Adrenal gland (tissue), 19 donors: ENCODE measurements at regions of chr11 and their contacts with region 1.

Region 1: DNA sequence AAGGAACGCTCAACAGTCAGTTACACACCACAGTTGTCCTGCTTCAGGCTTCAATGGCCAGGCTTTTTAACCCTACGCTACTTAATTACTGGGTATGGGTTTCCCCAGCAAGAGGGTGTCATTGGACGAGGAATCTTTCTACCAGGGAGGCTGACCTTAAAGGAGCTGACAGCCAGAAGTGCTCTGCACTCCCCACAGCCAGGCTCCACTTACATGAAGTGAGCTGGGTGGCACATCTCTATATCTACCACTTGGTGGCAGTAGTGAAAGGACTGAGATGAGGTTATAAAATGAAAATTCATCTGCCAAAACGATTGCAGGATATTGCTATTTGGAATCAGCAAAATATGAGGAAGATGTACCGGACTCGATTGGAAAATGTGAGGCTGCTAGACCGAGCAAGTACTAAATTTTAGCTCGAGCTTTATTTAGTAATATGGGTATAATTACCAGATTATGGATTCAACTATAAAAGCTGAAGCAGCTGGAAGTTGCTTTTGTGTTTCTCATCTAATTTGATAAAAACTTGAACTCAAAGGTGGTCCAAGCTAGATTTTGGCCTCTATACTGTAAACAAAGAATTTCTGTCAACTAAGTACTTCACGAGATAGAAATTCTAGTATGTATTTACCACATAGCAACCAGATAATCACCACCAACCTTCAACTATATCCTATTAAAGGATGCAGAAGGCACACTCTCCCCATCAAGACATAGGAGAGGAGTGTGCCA is 53.9 kb upstream of the CEP126 start:
- DNase-seq: peak; percentile 37 to 70 (median 51)
- H3K4me3 ChIP-seq: no peak overlapping the region
- H3K27ac ChIP-seq: no peak overlapping the region
- H3K4me1 ChIP-seq: peaks cover 0 to 7% of the 10 kb centered on the region in 2 donors
- H3K27me3 ChIP-seq: no peaks in the 10 kb centered on the region
- CTCF ChIP-seq: peak; percentile 66 to 85 (median 78)
- POLR2A ChIP-seq: no peak

Region 2: GRCh38 chr11:101929294-101929916 is 68.5 kb after region 1 on chr11:
- intact Hi-C with region 1: loop called in 1 of 2 experiments (anchors 10 kb)
- DNase-seq: no peak
- H3K4me3 ChIP-seq: no peak overlapping the region
- H3K27ac ChIP-seq: no peak overlapping the region
- H3K4me1 ChIP-seq: no peaks in the 10 kb centered on the region
- H3K27me3 ChIP-seq: no peaks in the 10 kb centered on the region
- CTCF ChIP-seq: no peak
- POLR2A ChIP-seq: no peak

Region 3: DNA sequence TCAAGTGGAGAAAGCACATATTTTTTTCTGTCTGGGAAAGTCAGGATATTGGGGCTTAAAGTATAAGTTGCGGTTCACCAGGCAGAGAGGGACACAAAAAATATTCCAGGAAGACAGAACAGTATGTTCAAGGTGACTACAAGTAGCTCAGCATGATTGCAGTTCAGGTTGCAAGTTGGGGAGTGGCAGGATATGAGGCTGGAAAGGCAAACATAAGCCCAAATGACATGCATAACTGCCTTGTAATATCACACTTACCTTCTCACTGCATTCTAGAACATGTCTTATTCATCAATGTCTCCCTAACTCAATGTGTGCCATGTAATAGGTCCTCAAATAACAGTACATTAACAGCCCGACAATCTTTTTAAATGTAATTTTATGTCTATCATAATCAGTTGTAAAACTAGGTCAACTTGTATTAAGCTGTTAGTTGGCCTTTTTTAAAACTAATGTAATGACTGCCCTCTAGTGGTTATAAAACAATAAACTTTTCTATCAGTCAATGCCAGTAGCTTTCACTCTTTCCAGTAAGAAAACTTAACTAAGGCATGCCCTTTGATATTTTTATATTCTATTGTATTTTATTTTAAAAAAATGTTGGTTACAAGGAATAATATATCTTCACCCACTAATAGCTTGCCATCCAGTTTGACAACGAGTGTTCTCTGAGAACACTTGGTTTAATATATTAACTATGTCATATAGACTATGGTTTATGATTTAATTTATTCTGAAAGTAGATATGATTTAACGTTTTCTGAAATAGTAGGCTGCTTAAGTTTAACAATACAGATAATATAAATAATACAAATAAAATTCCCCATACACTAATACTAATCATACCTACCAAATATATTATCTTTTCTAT is 146.9 kb after region 1 on chr11:
- intact Hi-C with region 1: loop called in 1 of 2 experiments (anchors 5 kb)
- DNase-seq: no peak
- H3K4me3 ChIP-seq: no peak overlapping the region
- H3K27ac ChIP-seq: no peak overlapping the region
- H3K4me1 ChIP-seq: peaks cover 10 to 12% of the 10 kb centered on the region in 2 donors
- H3K27me3 ChIP-seq: no peaks in the 10 kb centered on the region
- CTCF ChIP-seq: peak; percentile 47 to 72 (median 56)
- POLR2A ChIP-seq: no peak

Region 4: GRCh38 chr11:102171101-102171500 is 310.2 kb after region 1 on chr11:
- intact Hi-C with region 1: no loop called
- DNase-seq: no peak
- H3K4me3 ChIP-seq: peak overlapping the region in 1 of 4 donors; percentile 5
- H3K27ac ChIP-seq: peak overlapping the region in 4 of 5 donors; percentile 13 to 75 (median 70)
- H3K4me1 ChIP-seq: peaks cover 18 to 19% of the 10 kb centered on the region in 2 donors
- H3K27me3 ChIP-seq: no peaks in the 10 kb centered on the region
- CTCF ChIP-seq: no peak
- POLR2A ChIP-seq: no peak